ENCODE measurements at regions of chr15 and their contacts with region 1.

Region 1: DNA sequence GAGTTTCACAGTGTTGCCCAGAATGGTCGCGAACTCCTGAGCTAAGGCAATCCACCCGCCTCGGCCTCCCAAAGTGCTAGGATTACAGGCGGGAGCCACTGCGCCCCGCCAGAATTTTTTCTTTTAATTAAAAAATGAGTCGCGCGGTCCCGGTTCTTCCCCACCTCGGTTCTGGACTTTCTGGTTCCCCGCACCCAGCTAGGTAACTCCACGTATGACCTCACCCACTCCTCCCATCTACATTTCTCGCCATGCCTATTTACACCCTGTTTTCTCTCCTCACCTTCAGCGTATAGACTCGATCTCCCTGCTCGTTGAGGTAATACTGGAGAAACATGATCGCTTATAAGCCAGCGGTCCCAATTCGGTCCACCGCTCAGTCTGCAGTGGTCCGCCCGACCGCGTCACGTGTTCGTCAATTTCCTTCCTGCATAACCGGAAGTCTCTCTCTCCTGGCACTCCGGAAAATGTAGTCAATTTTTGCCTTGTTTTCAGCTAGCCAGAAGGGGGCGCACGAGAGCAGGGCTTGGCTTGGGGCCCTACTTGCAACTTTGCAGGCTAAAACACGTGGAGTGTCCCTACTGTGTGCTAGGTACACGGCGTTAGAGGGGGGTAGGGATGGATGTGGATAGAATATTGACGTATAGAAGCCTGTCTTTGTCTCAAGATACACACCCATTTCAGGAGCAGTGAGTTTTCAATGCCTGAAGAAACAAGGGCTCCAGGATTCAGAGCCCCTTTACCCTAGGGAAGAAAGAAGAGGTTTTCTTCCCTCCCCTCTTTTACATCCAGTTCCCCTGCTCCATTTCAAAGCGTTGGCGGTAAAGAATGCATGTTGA is at the starts of genes NOP10 and NUTM1:
- H3K4me3 ChIP-seq: peak within 1 kb of the TSS; percentile 76
- H3K27ac ChIP-seq: peak within 1 kb of the TSS; percentile 40
- H3K4me1 ChIP-seq: no peaks in the 10 kb centered on the region
- CTCF ChIP-seq: peak; percentile 88

Region 2: DNA sequence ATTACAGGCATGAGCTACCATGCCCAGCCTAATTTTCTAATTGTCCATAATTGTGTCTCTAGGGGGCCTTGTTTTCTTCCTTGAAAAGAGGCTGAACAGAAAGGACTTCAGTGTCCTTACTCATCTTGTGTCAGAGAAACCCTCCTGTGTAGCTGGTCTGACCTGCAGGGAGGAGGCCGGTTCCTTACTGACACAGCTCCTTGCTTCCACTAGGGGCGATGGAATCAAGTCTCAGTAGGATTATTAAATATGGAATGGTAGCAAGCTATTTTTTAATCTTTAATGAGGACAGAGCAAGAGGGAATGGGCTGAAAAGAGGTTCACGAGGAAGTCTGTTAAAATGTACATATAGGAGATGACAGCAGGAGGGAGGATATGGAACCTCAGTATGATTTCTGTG is 15.4 kb after region 1 on chr15:
- CTCF ChIA-PET with region 1: interaction called, 13 read pairs
- POLR2A ChIA-PET with region 1: no interaction called
- H3K4me3 ChIP-seq: no peak overlapping the region
- H3K27ac ChIP-seq: no peak overlapping the region
- H3K4me1 ChIP-seq: no peaks in the 10 kb centered on the region
- CTCF ChIP-seq: no peak

Region 3: GRCh38 chr15:34367101-34368081 is 24.4 kb after region 1 on chr15 and contains the start of gene LPCAT4:
- CTCF ChIA-PET with region 1: interaction called, 15 read pairs
- POLR2A ChIA-PET with region 1: interaction called, 14 read pairs
- H3K4me3 ChIP-seq: peak within 1 kb of the TSS; percentile 69
- H3K27ac ChIP-seq: peak within 1 kb of the TSS; percentile 92
- H3K4me1 ChIP-seq: no peaks in the 10 kb centered on the region; the same call in 1 of the 2 replicates
- CTCF ChIP-seq: peak; percentile 99

Region 4: GRCh38 chr15:34470091-34470490 is 127.1 kb after region 1 on chr15:
- CTCF ChIA-PET with region 1: no interaction called
- POLR2A ChIA-PET with region 1: no interaction called
- H3K4me3 ChIP-seq: no peak overlapping the region
- H3K27ac ChIP-seq: no peak overlapping the region
- H3K4me1 ChIP-seq: no peaks in the 10 kb centered on the region
- CTCF ChIP-seq: no peak